ENCODE measurements at regions of chr16 and their contacts with region 1.

Region 1: GRCh38 chr16:3690470-3690928 is 26.8 kb downstream of the TRAP1 start:
- DNase-seq: peak; percentile 65 to 81 (median 75)
- ATAC-seq: peak; percentile 100
- H3K4me3 ChIP-seq: no peak overlapping the region
- H3K4me3 Mint-ChIP-seq: peak overlapping the region in 5 of 10 donors; percentile 17 to 71 (median 42)
- H3K27ac ChIP-seq: no peak overlapping the region
- H3K27ac Mint-ChIP-seq: peak overlapping the region in 5 of 9 donors; percentile 6 to 61 (median 53)
- H3K4me1 ChIP-seq: peaks cover 3 to 7% of the 10 kb centered on the region in 2 donors
- H3K4me1 Mint-ChIP-seq: peaks cover 7 to 10% (median 9%) of the 10 kb centered on the region in 7 donors
- H3K27me3 ChIP-seq: no peaks in the 10 kb centered on the region
- H3K27me3 Mint-ChIP-seq: no peaks in the 10 kb centered on the region

Region 2: GRCh38 chr16:3717235-3718018 is 26.9 kb after region 1 on chr16 and contains the start of gene TRAP1:
- CTCF ChIA-PET with region 1: interaction called, 3 read pairs
- POLR2A ChIA-PET with region 1: interaction called, 3 read pairs
- intact Hi-C with region 1: loop called (anchors 1 kb)
- DNase-seq: peak; percentile 81 to 96 (median 88)
- ATAC-seq: peak; percentile 98
- H3K4me3 ChIP-seq: peak within 1 kb of the TSS; percentile 67
- H3K4me3 Mint-ChIP-seq: peak within 1 kb of the TSS; percentile 81 to 94 (median 89)
- H3K27ac ChIP-seq: peak within 1 kb of the TSS; percentile 94
- H3K27ac Mint-ChIP-seq: peak within 1 kb of the TSS; percentile 67 to 96 (median 92)
- H3K4me1 ChIP-seq: peaks cover 6 to 11% of the 10 kb centered on the region in 2 donors
- H3K4me1 Mint-ChIP-seq: peaks cover 14 to 47% (median 38%) of the 10 kb centered on the region in 7 donors
- H3K27me3 ChIP-seq: no peaks in the 10 kb centered on the region
- H3K27me3 Mint-ChIP-seq: no peaks in the 10 kb centered on the region
- total RNA-seq, gene TRAP1: 96.8 to 138 (median 132) TPM

Region 3: GRCh38 chr16:3735376-3736091 is 45.0 kb after region 1 on chr16:
- CTCF ChIA-PET with region 1: no interaction called
- POLR2A ChIA-PET with region 1: no interaction called
- intact Hi-C with region 1: loop called in 1 of 2 experiments (anchors 2 kb)
- DNase-seq: no peak
- ATAC-seq: no peak
- H3K4me3 ChIP-seq: no peak overlapping the region
- H3K4me3 Mint-ChIP-seq: no peak overlapping the region
- H3K27ac ChIP-seq: no peak overlapping the region
- H3K27ac Mint-ChIP-seq: peak overlapping the region in 3 of 9 donors; percentile 28 to 69 (median 68)
- H3K4me1 ChIP-seq: no peaks in the 10 kb centered on the region
- H3K4me1 Mint-ChIP-seq: peaks cover 0 to 8% (median 0%) of the 10 kb centered on the region in 7 donors
- H3K27me3 ChIP-seq: no peaks in the 10 kb centered on the region
- H3K27me3 Mint-ChIP-seq: no peaks in the 10 kb centered on the region

Region 4: DNA sequence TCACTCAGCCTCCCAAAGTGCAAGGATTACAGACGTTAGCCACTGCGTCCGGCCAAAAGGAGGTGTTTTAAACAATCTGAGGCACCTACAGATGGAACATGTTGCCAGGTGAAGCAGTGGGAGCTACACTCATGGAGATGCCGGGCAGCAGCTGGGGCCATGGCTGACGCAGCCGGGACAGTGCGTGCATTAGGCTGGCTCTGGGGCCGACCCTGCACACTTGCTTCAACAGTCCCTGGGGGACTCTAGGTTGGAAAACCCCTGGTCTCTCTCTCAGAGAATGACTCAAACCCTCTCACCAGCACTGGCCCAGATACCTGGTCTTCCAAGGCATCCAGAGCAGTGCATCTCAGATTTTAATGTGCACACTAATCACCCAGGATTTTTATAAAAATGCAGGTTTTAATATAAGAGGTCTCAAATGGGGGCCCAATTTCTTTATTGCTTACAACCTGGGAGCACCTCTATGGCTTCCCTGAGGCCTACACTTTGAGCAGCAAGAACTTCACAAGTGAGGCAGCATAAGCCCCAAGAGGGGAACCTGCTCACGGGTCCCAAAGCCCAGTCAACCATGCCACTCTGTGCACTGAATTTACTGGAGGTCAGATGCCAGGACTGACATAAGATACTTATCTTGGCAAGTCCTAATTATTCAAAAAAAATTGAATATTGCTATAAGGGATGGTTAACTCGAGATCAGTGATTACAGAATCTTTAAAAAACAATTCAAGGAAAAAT is 97.6 kb after region 1 on chr16:
- CTCF ChIA-PET with region 1: no interaction called
- POLR2A ChIA-PET with region 1: no interaction called
- intact Hi-C with region 1: no loop called
- DNase-seq: no peak
- ATAC-seq: no peak
- H3K4me3 ChIP-seq: no peak overlapping the region
- H3K4me3 Mint-ChIP-seq: peak overlapping the region in 4 of 10 donors; percentile 14 to 70 (median 42)
- H3K27ac ChIP-seq: no peak overlapping the region
- H3K27ac Mint-ChIP-seq: no peak overlapping the region
- H3K4me1 ChIP-seq: peaks cover 26 to 28% of the 10 kb centered on the region in 2 donors
- H3K4me1 Mint-ChIP-seq: peaks cover 48 to 76% (median 68%) of the 10 kb centered on the region in 7 donors
- H3K27me3 ChIP-seq: no peaks in the 10 kb centered on the region
- H3K27me3 Mint-ChIP-seq: peaks cover 0 to 6% (median 0%) of the 10 kb centered on the region in 5 donors

Region 5: GRCh38 chr16:3938848-3939624 is 248.5 kb after region 1 on chr16:
- CTCF ChIA-PET with region 1: no interaction called
- POLR2A ChIA-PET with region 1: no interaction called
- intact Hi-C with region 1: loop called in 1 of 2 experiments (anchors 1 kb)
- DNase-seq: peak; percentile 39 to 79 (median 63)
- ATAC-seq: peak; percentile 89
- H3K4me3 ChIP-seq: peak overlapping the region; percentile 35
- H3K4me3 Mint-ChIP-seq: peak overlapping the region; percentile 5 to 75 (median 52)
- H3K27ac ChIP-seq: no peak overlapping the region
- H3K27ac Mint-ChIP-seq: no peak overlapping the region
- H3K4me1 ChIP-seq: no peaks in the 10 kb centered on the region
- H3K4me1 Mint-ChIP-seq: peaks cover 0 to 4% (median 0%) of the 10 kb centered on the region in 7 donors
- H3K27me3 ChIP-seq: no peaks in the 10 kb centered on the region
- H3K27me3 Mint-ChIP-seq: peaks cover 0 to 7% (median 0%) of the 10 kb centered on the region in 5 donors

Region 6: DNA sequence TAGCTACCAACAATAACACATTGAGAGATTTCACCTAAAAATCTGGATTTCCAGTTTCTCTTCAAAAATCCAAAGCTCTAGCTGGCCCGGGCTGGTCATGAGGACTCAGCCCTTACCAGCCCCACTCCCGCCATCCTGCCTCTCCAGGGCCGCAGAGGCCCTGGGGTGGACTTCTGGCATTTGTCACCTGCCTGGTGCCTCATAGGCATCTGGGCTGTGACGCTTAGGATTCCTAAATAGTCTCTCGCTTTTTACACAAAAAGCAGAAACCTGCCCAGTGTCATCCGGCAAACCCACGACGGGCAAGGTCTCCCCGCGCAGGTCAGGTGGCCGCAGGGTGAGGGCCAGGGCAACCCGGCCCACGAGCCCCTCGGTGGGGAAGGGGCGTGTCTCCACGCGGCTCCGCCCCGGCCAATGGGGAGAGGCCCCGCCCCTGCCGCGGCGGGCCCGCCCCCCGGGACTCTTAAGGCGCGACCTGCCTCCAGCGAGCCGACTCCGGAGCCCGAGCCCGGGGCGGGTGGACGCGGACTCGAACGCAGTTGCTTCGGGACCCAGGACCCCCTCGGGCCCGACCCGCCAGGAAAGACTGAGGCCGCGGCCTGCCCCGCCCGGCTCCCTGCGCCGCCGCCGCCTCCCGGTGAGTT is 681.0 kb after region 1 on chr16 and contains the start of gene VASN:
- CTCF ChIA-PET with region 1: no interaction called
- POLR2A ChIA-PET with region 1: no interaction called
- intact Hi-C with region 1: no loop called
- DNase-seq: peak; percentile 68 to 84 (median 78)
- ATAC-seq: peak; percentile 89
- H3K4me3 ChIP-seq: peak within 1 kb of the TSS; percentile 51
- H3K4me3 Mint-ChIP-seq: peak within 1 kb of the TSS; percentile 61 to 88 (median 81)
- H3K27ac ChIP-seq: peak within 1 kb of the TSS; percentile 58
- H3K27ac Mint-ChIP-seq: peak within 1 kb of the TSS in 6 of 9 donors; percentile 43 to 74 (median 66)
- H3K4me1 ChIP-seq: peaks cover 15 to 19% of the 10 kb centered on the region in 2 donors
- H3K4me1 Mint-ChIP-seq: peaks cover 0 to 24% (median 12%) of the 10 kb centered on the region in 7 donors
- H3K27me3 ChIP-seq: no peaks in the 10 kb centered on the region
- H3K27me3 Mint-ChIP-seq: no peaks in the 10 kb centered on the region
- total RNA-seq, gene VASN: 0.24 to 1.3 (median 0.45) TPM in 4 of 5 experiments, not detected in the other